Aorta (tissue), 5 donors: ENCODE measurements at regions of chr14 and their contacts with region 1.

Region 1: DNA sequence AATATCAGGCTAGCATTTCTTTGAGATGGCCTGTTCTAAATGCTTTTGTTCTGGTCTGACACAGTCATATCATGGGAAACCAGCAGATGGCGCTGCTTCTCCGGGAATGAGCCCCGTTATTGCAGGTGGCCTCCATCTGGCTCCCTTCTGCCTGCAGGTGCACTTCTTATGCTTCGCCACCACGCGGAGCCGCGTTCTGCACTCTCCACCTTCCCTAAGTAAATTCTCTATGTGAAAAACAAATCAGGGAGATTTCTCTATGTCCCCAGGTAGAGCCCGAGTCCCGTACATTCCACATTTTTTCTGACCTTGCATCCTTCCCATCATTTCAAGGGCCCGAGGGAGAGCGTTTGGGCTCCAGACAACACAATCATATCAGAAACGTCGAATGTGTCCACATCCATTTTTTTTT is 26.2 kb downstream of the GLRX5 start:
- DNase-seq: peak; percentile 82 to 92
- ATAC-seq: peak; percentile 85
- H3K4me3 ChIP-seq: no peak overlapping the region
- H3K27ac ChIP-seq: no peak overlapping the region
- H3K4me1 ChIP-seq: no peaks in the 10 kb centered on the region
- H3K27me3 ChIP-seq: no peaks in the 10 kb centered on the region

Region 2: DNA sequence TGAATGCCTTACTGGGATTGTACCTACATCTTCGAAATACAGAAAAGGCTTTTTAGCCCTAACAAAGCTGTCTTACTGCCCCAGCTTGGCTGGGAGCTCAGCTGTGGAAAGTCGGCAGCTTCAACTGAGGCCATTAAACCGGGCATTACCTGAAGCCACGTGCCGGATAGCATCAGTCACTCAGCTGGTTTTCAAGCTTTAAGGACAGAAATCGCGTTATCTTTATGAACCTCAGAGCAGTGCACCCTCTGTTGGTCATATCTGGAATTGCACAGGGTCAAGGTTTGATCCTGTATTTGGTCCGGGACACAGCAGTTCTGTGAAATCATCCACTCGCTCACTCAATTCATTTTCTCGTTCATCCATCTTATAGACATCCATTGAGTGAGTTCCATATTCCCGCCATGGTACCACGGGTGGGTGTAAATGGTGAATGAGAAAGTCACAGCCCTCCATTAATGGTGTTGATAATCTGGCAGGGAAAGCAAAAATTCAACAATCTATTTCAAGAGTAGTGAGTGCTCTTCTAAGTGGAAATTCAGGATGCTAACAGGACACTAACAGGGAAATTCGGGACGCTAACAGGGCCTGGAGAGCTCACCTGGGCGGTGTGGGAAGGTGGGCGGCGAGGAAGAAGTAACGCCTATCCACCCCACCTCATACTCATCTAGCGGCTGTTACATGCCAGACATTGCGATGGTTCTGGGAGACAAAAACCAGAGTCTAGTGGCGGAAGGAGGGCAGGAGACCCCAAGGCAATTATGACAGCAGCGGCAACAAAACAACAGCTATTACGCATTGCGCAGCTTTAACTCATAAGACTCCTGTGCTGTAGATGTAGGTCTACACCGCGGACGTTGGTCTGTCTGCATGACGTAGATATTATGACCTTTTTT is 213.5 kb after region 1 on chr14:
- intact Hi-C with region 1: loop called (anchors 5 kb)
- DNase-seq: no peak
- ATAC-seq: no peak
- H3K4me3 ChIP-seq: no peak overlapping the region
- H3K27ac ChIP-seq: no peak overlapping the region
- H3K4me1 ChIP-seq: no peaks in the 10 kb centered on the region
- H3K27me3 ChIP-seq: no peaks in the 10 kb centered on the region

Region 3: DNA sequence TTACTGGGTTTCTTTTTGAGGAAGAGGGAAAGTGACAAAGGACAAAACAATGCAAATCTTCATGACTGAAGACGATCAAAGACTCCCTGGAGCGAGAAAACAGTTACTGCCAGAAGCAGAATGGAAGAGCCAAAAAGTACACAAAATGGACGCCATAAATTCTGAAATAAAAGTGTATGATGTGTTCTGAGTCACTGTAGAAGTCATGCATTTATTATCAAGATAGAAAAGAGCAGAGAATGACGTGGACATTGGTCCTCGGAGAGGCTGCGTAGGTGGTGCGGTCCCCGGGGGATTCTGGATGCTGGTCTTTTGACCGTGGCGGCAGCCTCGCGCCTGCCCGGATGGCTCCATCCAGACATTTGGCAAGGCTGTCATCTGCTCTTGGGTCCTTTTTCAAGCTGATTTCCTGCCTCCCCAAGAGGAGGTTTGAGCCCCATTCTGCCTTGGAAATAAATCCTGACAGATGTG is 531.0 kb after region 1 on chr14:
- intact Hi-C with region 1: loop called in 1 of 2 experiments (anchors 2 kb)
- DNase-seq: peak in 1 of 2 donors; percentile 80
- ATAC-seq: no peak
- H3K4me3 ChIP-seq: no peak overlapping the region
- H3K27ac ChIP-seq: no peak overlapping the region
- H3K4me1 ChIP-seq: no peaks in the 10 kb centered on the region
- H3K27me3 ChIP-seq: no peaks in the 10 kb centered on the region

Region 4: DNA sequence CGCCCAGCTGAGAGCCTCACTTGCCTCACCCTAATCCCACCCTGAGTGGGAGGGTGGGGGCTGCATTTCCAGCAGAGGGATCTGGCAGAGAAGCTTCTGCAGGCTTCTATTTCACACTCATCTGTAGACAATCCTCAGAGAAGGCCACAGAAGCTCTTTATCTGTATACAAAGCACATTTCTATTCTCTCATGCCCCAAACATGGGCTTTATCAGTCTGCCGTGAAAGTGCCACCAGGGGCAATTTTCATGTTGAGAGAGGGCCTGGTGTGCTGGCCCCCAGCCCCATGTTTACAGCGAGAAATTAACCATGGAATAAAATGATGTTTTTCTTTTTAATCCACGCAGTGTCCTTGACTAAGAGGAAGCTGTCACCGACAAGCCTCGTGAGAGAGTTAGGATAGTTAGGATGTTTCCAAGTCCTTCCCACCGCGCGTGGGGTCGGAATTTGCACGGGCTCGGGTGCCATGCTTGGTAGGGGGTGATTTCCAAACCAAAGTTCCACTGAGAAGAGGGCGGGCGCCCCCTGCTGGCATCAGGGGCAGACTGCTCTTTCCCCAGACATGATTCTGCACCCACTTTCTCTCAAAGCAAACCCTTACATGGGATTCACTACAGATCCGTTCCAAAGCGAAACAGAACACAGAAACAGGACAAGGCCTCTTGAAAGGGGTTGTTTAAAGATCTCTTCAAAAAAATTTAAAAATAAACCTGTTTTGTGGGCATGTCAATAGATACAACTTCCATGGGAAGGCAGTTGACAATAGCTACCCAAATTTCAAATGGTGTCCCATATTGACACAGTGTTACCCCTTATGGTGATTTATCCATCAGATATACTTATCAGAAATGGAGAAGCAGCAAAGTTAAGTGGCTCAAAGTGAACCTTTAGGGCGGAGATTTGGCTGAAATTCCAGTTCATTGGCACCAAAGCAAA is 714.4 kb after region 1 on chr14:
- intact Hi-C with region 1: loop called in 1 of 2 experiments (anchors 5 kb)
- DNase-seq: peak; percentile 72 to 93
- ATAC-seq: peak; percentile 73
- H3K4me3 ChIP-seq: no peak overlapping the region
- H3K27ac ChIP-seq: no peak overlapping the region
- H3K4me1 ChIP-seq: no peaks in the 10 kb centered on the region
- H3K27me3 ChIP-seq: no peaks in the 10 kb centered on the region